ENCODE measurements at regions of chr17 and their contacts with region 1.

Region 1: GRCh38 chr17:48024937-48025906 is 12.4 kb downstream of the COPZ2 start:
- DNase-seq: peak in 1 of 2 donors; percentile 99
- H3K4me3 ChIP-seq: peak overlapping the region; percentile 49 to 61
- H3K27ac ChIP-seq: peak overlapping the region; percentile 77
- H3K4me1 ChIP-seq: peaks cover 38% of the 10 kb centered on the region
- H3K27me3 ChIP-seq: no peaks in the 10 kb centered on the region
- CTCF ChIP-seq: peak; percentile 25 to 77 (median 66)
- POLR2A ChIP-seq: no peak

Region 2: GRCh38 chr17:47941236-47941994 is 83.8 kb before region 1 on chr17 and contains the start of gene PNPO:
- intact Hi-C with region 1: loop called (anchors 10 kb)
- DNase-seq: peak; percentile 98 to 99
- H3K4me3 ChIP-seq: peak within 1 kb of the TSS; percentile 73 to 90
- H3K27ac ChIP-seq: peak within 1 kb of the TSS; percentile 75
- H3K4me1 ChIP-seq: peaks cover 22% of the 10 kb centered on the region
- H3K27me3 ChIP-seq: no peaks in the 10 kb centered on the region
- CTCF ChIP-seq: no peak
- POLR2A ChIP-seq: no peak
- total RNA-seq, gene PNPO: 42.7 TPM

Region 3: GRCh38 chr17:48071654-48072053 is 46.4 kb after region 1 on chr17:
- intact Hi-C with region 1: loop called (anchors 2 kb)
- DNase-seq: no peak
- H3K4me3 ChIP-seq: no peak overlapping the region
- H3K27ac ChIP-seq: no peak overlapping the region
- H3K4me1 ChIP-seq: peaks cover 19% of the 10 kb centered on the region
- H3K27me3 ChIP-seq: no peaks in the 10 kb centered on the region
- CTCF ChIP-seq: no peak
- POLR2A ChIP-seq: no peak

Region 4: GRCh38 chr17:48123111-48123510 is 97.9 kb after region 1 on chr17:
- intact Hi-C with region 1: loop called (anchors 5 kb)
- DNase-seq: no peak
- H3K4me3 ChIP-seq: no peak overlapping the region
- H3K27ac ChIP-seq: no peak overlapping the region
- H3K4me1 ChIP-seq: no peaks in the 10 kb centered on the region
- H3K27me3 ChIP-seq: no peaks in the 10 kb centered on the region
- CTCF ChIP-seq: no peak
- POLR2A ChIP-seq: no peak

Region 5: DNA sequence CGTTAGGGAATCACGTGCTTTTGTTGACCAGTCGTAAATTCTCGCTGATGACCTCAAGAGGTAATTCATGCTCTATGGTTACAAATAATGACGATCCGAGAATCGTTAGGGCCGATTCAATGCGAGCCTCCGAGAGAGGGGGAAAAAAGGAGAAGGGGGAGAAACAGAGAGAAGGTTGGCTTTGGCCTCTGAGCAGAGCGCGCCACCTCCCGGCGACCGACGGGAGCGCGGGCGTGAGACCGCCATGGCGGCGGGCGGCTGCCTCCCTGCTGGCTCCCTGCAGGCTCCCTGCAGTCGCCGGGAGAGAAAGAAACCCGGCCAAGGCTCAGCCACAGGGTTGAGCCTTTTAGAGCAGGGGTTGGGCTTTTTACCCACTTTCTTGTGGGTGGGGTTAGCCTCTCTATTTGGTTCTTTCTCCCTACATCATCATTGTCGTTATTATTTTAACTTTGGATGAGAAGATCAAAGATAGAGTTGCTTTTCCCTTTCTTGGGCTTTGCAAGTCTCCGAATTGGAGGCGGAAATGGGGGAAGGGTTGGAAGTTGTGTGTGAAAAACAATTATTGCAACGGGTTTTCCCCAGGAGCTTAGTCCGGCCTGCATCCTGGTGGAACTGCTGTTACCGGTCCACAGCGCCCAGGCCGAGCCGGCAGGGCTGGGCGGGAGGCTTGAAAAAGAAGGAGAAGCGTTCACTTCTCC is 568.8 kb after region 1 on chr17:
- intact Hi-C with region 1: loop called (anchors 10 kb)
- DNase-seq: no peak
- H3K4me3 ChIP-seq: peak overlapping the region in 1 of 2 donors; percentile 11
- H3K27ac ChIP-seq: no peak overlapping the region
- H3K4me1 ChIP-seq: peaks cover 34% of the 10 kb centered on the region
- H3K27me3 ChIP-seq: peaks cover 6% of the 10 kb centered on the region
- CTCF ChIP-seq: peak in 2 of 3 experiments; percentile 70 to 75
- POLR2A ChIP-seq: no peak